Stomach (tissue), 19 donors: ENCODE measurements at regions of chr12 and their contacts with region 1.

Region 1: GRCh38 chr12:96587691-96588090 is 98.3 kb downstream of the CFAP54 start:
- DNase-seq: no peak
- H3K4me3 ChIP-seq: no peak overlapping the region
- H3K27ac ChIP-seq: no peak overlapping the region
- H3K4me1 ChIP-seq: no peaks in the 10 kb centered on the region
- H3K27me3 ChIP-seq: no peaks in the 10 kb centered on the region
- CTCF ChIP-seq: no peak
- EP300 ChIP-seq: no peak
- POLR2A ChIP-seq: no peak

Region 2: DNA sequence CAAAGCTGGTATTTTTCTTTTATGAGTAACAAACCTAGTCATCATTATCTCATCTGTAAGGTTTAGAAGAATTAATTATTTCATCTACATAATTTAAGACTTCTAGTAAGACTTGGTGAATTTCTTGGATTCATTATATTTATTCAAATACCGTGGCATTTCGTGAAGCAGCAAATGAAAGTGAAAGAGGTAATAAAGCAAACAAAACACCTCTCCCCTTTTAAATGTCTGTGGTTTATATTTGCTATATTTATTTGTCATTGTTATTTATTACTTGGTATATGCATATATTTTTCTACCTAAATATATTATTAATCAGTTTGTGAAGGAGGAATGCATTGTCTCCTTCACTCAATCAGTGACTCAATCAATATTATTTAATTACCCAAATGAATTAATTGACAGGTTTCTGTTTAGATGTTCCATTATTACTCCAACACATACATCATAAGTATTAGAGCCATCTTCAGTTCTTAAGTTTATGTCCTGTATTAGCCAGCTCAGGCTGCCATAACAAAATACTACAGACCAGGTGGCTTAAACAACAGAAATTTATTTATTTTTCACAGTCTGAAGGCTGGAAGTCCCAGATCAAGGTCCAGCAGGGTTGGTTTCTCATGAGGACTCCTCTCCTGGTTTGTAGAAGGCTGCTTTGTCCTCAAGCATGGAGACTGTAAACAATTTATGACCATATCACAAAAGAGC is 91.7 kb before region 1 on chr12:
- intact Hi-C with region 1: no loop called
- DNase-seq: no peak
- H3K4me3 ChIP-seq: no peak overlapping the region
- H3K27ac ChIP-seq: peak overlapping the region in 1 of 5 donors; percentile 22
- H3K4me1 ChIP-seq: peaks cover 0 to 8% (median 3%) of the 10 kb centered on the region in 4 donors
- H3K27me3 ChIP-seq: no peaks in the 10 kb centered on the region
- CTCF ChIP-seq: no peak
- EP300 ChIP-seq: no peak
- POLR2A ChIP-seq: no peak

Region 3: GRCh38 chr12:97308576-97309198 is 721.0 kb after region 1 on chr12:
- intact Hi-C with region 1: loop called (anchors 10 kb)
- DNase-seq: peak in 1 of 2 donors; percentile 71
- H3K4me3 ChIP-seq: no peak overlapping the region
- H3K27ac ChIP-seq: no peak overlapping the region
- H3K4me1 ChIP-seq: no peaks in the 10 kb centered on the region
- H3K27me3 ChIP-seq: peaks cover 0 to 19% (median 0%) of the 10 kb centered on the region in 3 donors
- CTCF ChIP-seq: peak in 5 of 7 experiments; percentile 21 to 67 (median 61)
- EP300 ChIP-seq: no peak
- POLR2A ChIP-seq: no peak